Esophagus muscularis mucosa (tissue), 4 donors: ENCODE measurements at regions of chr17 and their contacts with region 1.

Region 1: DNA sequence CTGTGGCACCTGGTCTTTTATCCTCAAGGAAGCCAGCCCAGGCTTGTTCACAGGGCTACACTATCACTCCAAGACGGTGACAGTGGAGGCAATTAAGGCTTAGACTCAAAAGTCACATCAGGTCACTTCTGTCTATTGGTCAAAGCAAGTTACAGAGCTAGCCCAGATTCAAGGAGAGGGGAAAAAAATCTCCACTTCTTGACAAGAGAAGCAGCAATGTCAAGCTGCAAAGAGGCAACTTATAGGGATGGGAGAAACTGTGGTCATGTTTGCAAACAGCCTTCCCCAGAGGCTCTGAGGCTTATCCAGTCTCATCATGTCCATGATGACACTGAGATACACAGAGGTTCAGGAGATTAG is 31.6 kb downstream of the SERPINF1 start:
- DNase-seq: no peak
- H3K4me3 ChIP-seq: no peak overlapping the region
- H3K27ac ChIP-seq: no peak overlapping the region
- H3K4me1 ChIP-seq: peaks cover 20 to 24% (median 21%) of the 10 kb centered on the region in 4 donors
- H3K27me3 ChIP-seq: no peaks in the 10 kb centered on the region
- CTCF ChIP-seq: no peak
- EP300 ChIP-seq: no peak
- POLR2A ChIP-seq: no peak

Region 2: GRCh38 chr17:1865252-1866037 is 72.0 kb after region 1 on chr17:
- intact Hi-C with region 1: loop called (anchors 10 kb)
- DNase-seq: no peak
- H3K4me3 ChIP-seq: no peak overlapping the region
- H3K27ac ChIP-seq: no peak overlapping the region
- H3K4me1 ChIP-seq: peaks cover 0 to 7% (median 0%) of the 10 kb centered on the region in 4 donors
- H3K27me3 ChIP-seq: no peaks in the 10 kb centered on the region
- CTCF ChIP-seq: peak; percentile 53 to 70 (median 59)
- EP300 ChIP-seq: no peak
- POLR2A ChIP-seq: no peak